ENCODE measurements at regions of chr12 and their contacts with region 1.

Region 1: DNA sequence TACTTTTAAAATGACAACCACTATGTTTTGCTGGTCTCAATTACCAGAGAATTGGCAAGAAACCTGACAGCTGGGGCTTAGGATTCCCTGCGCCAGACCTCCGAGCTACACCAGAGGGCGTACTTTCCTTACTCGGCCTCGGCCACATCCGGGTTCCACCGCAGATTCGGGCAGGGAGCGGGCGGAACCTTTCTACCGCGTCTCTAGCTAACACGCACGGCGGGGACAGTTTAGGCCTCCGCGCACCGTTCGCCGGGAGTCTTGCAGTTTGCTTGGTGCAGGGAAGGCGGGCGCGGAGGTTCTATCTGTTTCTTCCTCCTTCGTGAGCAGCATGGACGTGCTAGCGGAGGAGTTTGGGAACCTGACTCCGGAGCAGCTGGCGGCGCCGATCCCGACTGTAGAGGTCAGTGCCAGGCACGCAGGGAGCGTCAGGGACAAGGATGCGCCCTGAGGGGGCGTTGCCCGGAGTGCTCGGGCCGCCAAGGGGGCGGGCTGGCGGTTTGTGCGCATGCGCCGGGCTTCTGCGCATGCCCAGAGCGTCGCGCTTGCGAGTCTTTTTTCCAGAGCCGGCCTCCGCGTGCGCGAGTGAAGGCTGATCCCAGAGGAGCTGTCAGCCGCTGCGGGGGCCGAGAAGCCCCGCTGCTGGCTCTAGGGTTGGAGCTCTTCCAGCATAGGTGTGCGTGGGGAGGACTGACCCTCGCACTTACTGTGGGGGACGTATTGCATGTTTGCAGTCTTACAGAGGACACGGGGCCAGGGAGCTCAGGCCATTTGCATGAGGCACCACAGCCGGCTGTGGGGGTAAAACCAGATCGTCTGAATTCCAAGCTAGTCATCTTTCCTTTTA is at the start of gene POLR3B:
- DNase-seq: peak; percentile 92 to 96 (median 94)
- H3K4me3 ChIP-seq: peak within 1 kb of the TSS; percentile 39 to 96 (median 82)
- H3K27ac ChIP-seq: peak within 1 kb of the TSS; percentile 83 to 100 (median 99)
- H3K27me3 ChIP-seq: no peaks in the 10 kb centered on the region
- CTCF ChIP-seq: peak; percentile 81 to 98 (median 93)
- total RNA-seq, gene POLR3B: 7.5 to 25.1 (median 12.6) TPM

Region 2: DNA sequence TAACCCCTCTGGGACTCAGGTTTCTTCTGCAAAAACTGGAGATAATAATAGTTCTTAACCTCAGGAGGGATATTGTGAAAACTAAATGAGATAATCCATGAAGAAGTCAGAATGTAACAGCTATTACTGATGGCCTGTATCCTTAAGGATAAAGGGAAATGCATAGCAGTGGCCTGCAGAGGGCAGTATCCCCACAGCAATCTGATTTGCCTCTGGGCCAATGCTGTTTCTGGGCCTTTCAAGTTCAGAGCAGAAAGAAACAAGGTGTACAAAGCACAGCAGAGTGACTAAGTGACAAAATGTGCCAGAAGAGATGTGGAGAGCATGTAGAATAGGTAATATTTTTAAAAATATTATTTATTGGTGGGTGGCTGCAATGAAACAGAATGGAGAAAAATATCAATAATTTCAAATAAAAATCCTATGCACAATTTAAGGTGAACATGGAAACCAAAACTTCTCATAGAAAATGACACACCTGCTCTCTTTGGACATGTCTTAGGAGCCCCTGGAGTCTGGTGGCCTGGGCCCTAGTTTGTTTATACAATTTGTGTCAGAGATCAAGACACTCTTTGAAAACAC is 937.0 kb before region 1 on chr12:
- intact Hi-C with region 1: loop called in 1 of 2 experiments (anchors 5 kb)
- DNase-seq: peak; percentile 53 to 89 (median 77)
- H3K4me3 ChIP-seq: no peak overlapping the region
- H3K27ac ChIP-seq: no peak overlapping the region
- H3K27me3 ChIP-seq: no peaks in the 10 kb centered on the region
- CTCF ChIP-seq: peak; percentile 79 to 99 (median 93)

Region 3: GRCh38 chr12:106282457-106283097 is 75.2 kb before region 1 on chr12:
- intact Hi-C with region 1: no loop called
- DNase-seq: no peak
- H3K4me3 ChIP-seq: no peak overlapping the region
- H3K27ac ChIP-seq: no peak overlapping the region
- H3K27me3 ChIP-seq: no peaks in the 10 kb centered on the region
- CTCF ChIP-seq: peak in 55 of 56 donors; percentile 36 to 68 (median 57)

Region 4: GRCh38 chr12:106302401-106303201 is 55.2 kb before region 1 on chr12 and contains the start of gene TCP11L2:
- intact Hi-C with region 1: loop called (anchors 2 kb)
- DNase-seq: peak; percentile 85 to 93 (median 90)
- H3K4me3 ChIP-seq: peak within 1 kb of the TSS; percentile 66 to 100 (median 93)
- H3K27ac ChIP-seq: peak within 1 kb of the TSS; percentile 88 to 100 (median 98)
- H3K27me3 ChIP-seq: no peaks in the 10 kb centered on the region
- CTCF ChIP-seq: no peak
- total RNA-seq, gene TCP11L2: 20.9 to 141 (median 42.8) TPM

Region 5: DNA sequence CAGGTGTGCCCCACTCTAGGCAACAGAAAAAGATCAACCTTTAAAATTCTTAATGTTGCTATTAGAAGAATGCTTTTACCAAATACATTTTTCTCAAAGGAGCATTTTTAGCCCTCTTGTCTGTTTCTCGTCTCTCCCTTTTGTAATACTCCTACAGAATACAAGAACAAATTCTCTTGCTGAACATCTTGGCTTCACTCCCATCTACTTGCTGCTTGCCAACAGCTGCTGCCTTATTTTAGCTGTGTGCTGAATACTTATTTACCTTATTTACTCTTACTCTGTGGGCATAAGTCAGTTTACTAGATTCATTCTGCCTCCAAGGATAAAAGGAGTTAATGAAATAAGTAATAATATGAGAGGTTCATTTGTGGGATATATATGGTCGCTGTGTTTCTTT is 70.6 kb after region 1 on chr12:
- intact Hi-C with region 1: no loop called
- DNase-seq: peak in 2 of 10 donors; percentile 24 to 37
- H3K4me3 ChIP-seq: peak overlapping the region in 2 of 59 donors; percentile 4 to 11
- H3K27ac ChIP-seq: peak overlapping the region in 21 of 59 donors; percentile 2 to 83 (median 34)
- H3K27me3 ChIP-seq: no peaks in the 10 kb centered on the region
- CTCF ChIP-seq: no peak